ENCODE measurements at regions of chr10 and their contacts with region 1.

Region 1: GRCh38 chr10:86461963-86462804 is 59.4 kb downstream of the WAPL start:
- DNase-seq: no peak
- ATAC-seq: no peak
- H3K4me3 ChIP-seq: no peak overlapping the region
- H3K4me3 Mint-ChIP-seq: no peak overlapping the region
- H3K27ac ChIP-seq: no peak overlapping the region
- H3K27ac Mint-ChIP-seq: peak overlapping the region; percentile 25
- H3K4me1 ChIP-seq: no peaks in the 10 kb centered on the region
- H3K4me1 Mint-ChIP-seq: peaks cover 2% of the 10 kb centered on the region
- H3K27me3 ChIP-seq: no peaks in the 10 kb centered on the region
- H3K27me3 Mint-ChIP-seq: no peaks in the 10 kb centered on the region
- CTCF ChIP-seq: no peak

Region 2: DNA sequence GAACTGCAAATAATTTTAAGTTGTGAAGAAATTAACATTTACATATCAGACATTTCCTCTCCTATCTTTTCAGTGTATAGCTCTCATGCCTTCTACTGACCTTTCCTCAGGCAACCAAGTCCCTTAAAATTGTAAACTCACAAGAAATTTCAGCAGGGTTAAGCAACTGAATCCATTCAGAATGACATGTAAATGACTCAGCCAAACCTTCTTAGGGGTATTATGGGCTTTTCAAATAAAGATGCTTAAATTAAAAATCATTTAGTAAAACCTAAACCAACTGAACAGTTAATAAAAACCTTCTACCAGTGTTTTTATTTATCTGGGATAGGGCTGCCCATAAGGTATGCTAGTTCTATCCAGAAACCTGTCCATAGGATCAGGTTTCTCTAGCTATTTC is 38.7 kb after region 1 on chr10:
- CTCF ChIA-PET with region 1: no interaction called
- POLR2A ChIA-PET with region 1: no interaction called
- intact Hi-C with region 1: loop called in 1 of 2 experiments (anchors 5 kb)
- DNase-seq: no peak
- ATAC-seq: no peak
- H3K4me3 ChIP-seq: no peak overlapping the region
- H3K4me3 Mint-ChIP-seq: no peak overlapping the region
- H3K27ac ChIP-seq: no peak overlapping the region
- H3K27ac Mint-ChIP-seq: peak overlapping the region; percentile 2
- H3K4me1 ChIP-seq: peaks cover 1% of the 10 kb centered on the region
- H3K4me1 Mint-ChIP-seq: peaks cover 67% of the 10 kb centered on the region
- H3K27me3 ChIP-seq: no peaks in the 10 kb centered on the region
- H3K27me3 Mint-ChIP-seq: no peaks in the 10 kb centered on the region
- CTCF ChIP-seq: no peak